K562 (cell line): ENCODE measurements at regions of chr13 and their contacts with region 1.

Region 1: DNA sequence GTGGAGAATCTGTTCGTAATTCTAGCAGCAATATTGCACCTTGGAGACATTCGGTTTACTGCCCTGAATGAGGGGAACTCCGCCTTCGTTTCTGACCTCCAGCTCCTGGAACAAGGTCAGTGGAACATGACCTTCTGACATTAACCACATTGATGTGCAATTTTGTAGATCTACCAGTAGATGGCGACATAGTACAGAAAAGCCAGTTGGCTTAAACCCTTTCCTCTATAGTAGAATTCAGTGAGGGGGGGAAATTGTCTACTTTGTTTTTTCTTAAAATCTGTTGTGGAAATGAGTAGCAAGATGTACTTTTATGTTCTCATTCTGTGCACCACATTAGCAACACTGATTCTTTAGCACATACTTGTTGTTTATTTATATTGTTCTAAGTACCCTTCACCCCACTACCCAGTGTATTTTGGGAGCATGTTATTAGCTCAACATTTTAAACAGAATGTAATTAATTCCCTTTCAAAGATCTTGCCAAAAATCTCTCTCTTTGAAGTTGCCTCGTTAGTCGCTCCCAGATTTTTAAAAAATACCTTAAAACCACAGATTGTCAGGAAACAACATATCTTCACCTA is 332.2 kb downstream of the MYO16 start:
- DNase-seq: peak; percentile 26 to 54 (median 44)
- ATAC-seq: peak; percentile 79
- H3K4me3 ChIP-seq: no peak overlapping the region
- H3K27ac ChIP-seq: no peak overlapping the region
- H3K4me1 ChIP-seq: no peaks in the 10 kb centered on the region; a peak in 1 of 5 replicates
- H3K27me3 ChIP-seq: no peaks in the 10 kb centered on the region
- CTCF ChIP-seq: peak; percentile 45 to 70 (median 64); a peak in 5 of 6 replicates
- EP300 ChIP-seq: no peak
- POLR2A ChIP-seq: no peak
- RAD21 ChIP-seq: peak; percentile 76 to 80

Region 2: DNA sequence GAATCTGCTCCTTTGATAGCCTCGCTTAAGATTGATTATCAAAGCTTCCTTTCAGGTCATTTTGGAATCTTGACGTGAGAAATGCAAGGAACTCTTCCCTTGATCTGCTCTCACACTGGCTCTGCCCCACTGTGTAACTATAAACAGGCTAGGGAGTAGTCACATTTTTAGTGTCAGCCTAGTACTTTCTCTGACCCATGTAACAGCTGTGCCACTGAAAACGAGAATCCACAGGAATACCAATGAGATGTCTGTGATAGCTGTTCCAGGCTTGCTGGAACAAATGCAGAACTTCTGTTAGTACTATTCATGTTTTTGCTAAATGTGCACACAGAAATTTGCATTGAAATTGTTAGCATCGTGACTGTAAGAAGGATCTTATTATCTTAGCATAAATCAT is 110.9 kb before region 1 on chr13:
- CTCF ChIA-PET with region 1: no interaction called
- POLR2A ChIA-PET with region 1: no interaction called
- in situ Hi-C with region 1: no loop called
- intact Hi-C with region 1: no loop called
- DNase-seq: no peak
- ATAC-seq: no peak
- H3K4me3 ChIP-seq: no peak overlapping the region
- H3K27ac ChIP-seq: no peak overlapping the region
- H3K4me1 ChIP-seq: no peaks in the 10 kb centered on the region; a peak in 1 of 5 replicates
- H3K27me3 ChIP-seq: no peaks in the 10 kb centered on the region
- CTCF ChIP-seq: no peak
- EP300 ChIP-seq: no peak
- POLR2A ChIP-seq: no peak
- RAD21 ChIP-seq: no peak

Region 3: GRCh38 chr13:109131698-109132257 is 170.1 kb after region 1 on chr13:
- CTCF ChIA-PET with region 1: no interaction called
- POLR2A ChIA-PET with region 1: no interaction called
- in situ Hi-C with region 1: no loop called
- intact Hi-C with region 1: loop called (anchors 10 kb)
- DNase-seq: no peak
- ATAC-seq: no peak
- H3K4me3 ChIP-seq: no peak overlapping the region
- H3K27ac ChIP-seq: no peak overlapping the region
- H3K4me1 ChIP-seq: no peaks in the 10 kb centered on the region
- H3K27me3 ChIP-seq: no peaks in the 10 kb centered on the region
- CTCF ChIP-seq: no peak
- EP300 ChIP-seq: no peak
- POLR2A ChIP-seq: no peak
- RAD21 ChIP-seq: no peak

Region 4: DNA sequence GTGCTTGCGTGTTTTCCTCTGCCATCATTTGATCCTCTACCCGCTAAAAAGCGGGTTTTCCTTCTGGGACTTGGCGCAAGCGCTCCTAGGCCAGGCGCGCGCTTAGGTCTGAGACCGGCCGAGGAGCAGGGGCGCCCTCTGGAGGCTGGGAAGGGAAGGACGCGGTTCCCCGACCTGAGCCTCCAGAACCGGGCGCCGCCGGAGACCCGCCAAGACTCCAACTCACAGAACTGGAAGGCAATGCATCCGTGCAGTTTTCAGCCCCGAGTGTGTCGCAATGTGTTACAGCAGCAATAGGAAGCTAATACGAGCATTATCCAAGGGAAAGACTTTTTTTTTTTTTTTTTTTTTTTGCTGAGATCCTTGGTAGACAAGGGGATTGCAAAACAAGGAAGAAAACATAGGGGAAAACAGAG is 1154.4 kb after region 1 on chr13:
- CTCF ChIA-PET with region 1: interaction called, 3 read pairs
- POLR2A ChIA-PET with region 1: no interaction called
- in situ Hi-C with region 1: loop called (anchors 25 kb)
- intact Hi-C with region 1: loop called (anchors 2 kb)
- DNase-seq: peak; percentile 67 to 74 (median 72)
- ATAC-seq: peak; percentile 98
- H3K4me3 ChIP-seq: no peak overlapping the region
- H3K27ac ChIP-seq: no peak overlapping the region
- H3K4me1 ChIP-seq: peaks cover 0 to 3% of the 10 kb centered on the region in 2 experiments; a peak in 1 of 5 replicates
- H3K27me3 ChIP-seq: peaks cover 0 to 18% of the 10 kb centered on the region in 2 experiments; a peak in 4 of 5 replicates
- CTCF ChIP-seq: peak; percentile 72 to 79 (median 79)
- EP300 ChIP-seq: no peak
- POLR2A ChIP-seq: no peak
- RAD21 ChIP-seq: peak; percentile 63 to 78

Region 5: GRCh38 chr13:110412132-110412914 is 1450.7 kb after region 1 on chr13:
- CTCF ChIA-PET with region 1: no interaction called
- POLR2A ChIA-PET with region 1: no interaction called
- in situ Hi-C with region 1: no loop called
- intact Hi-C with region 1: loop called (anchors 10 kb)
- DNase-seq: peak; percentile 68 to 78 (median 74)
- ATAC-seq: peak; percentile 96
- H3K4me3 ChIP-seq: no peak overlapping the region
- H3K27ac ChIP-seq: no peak overlapping the region
- H3K4me1 ChIP-seq: no peaks in the 10 kb centered on the region
- H3K27me3 ChIP-seq: peaks cover 12 to 49% of the 10 kb centered on the region in 2 experiments; a peak in 4 of 5 replicates
- CTCF ChIP-seq: peak; percentile 74 to 84 (median 78)
- EP300 ChIP-seq: no peak
- POLR2A ChIP-seq: no peak
- RAD21 ChIP-seq: peak; percentile 35 to 68